Activated CD4-positive, alpha-beta T cell treated with anti-CD3 and anti-CD28 coated beads for 36 hours (primary cell): ENCODE measurements at regions of chr20 and their contacts with region 1.

Region 1: DNA sequence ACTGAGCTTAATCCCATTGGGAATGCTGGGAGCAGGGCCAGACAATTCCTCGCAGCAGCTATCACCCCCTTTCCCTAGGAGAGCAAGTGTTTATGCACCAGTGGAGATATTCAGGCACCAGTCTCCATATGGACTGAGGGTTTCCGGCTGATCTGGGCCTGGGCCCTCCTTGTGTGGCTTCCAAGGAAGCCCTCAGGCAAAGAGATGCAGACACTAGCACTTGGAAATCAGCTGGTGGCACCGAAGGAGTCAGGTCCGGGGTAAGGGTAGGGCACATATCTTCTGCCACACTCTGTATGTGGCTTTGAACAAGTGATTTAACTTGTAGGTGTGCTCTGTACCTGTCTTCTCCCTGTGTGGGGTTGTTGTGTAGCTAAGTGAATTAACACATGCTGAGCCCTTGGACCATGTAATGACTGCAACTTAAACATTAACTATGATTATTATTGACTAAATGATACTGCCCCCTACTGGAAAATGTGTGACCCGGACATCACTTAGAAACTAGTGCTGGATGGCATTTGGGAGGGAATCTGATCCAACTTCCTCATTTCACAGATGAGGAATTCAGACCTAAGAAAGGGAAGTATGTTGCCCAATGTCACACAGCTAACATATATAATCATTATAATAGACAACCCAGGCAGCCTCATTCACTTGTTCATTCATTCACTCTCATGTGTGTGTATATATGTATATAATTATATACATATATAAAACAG is 19.3 kb upstream of the WFDC2 start:
- DNase-seq: peak; percentile 24
- ATAC-seq: peak; percentile 53
- H3K4me3 Mint-ChIP-seq: no peak overlapping the region
- H3K27ac Mint-ChIP-seq: no peak overlapping the region
- H3K4me1 Mint-ChIP-seq: peaks cover 2% of the 10 kb centered on the region
- H3K27me3 Mint-ChIP-seq: peaks cover 4% of the 10 kb centered on the region

Region 2: GRCh38 chr20:45138561-45139300 is 311.5 kb before region 1 on chr20:
- CTCF ChIA-PET with region 1: no interaction called
- POLR2A ChIA-PET with region 1: no interaction called
- intact Hi-C with region 1: no loop called
- DNase-seq: peak; percentile 92
- ATAC-seq: peak; percentile 91
- H3K4me3 Mint-ChIP-seq: no peak overlapping the region
- H3K27ac Mint-ChIP-seq: no peak overlapping the region
- H3K4me1 Mint-ChIP-seq: no peaks in the 10 kb centered on the region
- H3K27me3 Mint-ChIP-seq: peaks cover 9% of the 10 kb centered on the region

Region 3: GRCh38 chr20:45311589-45312211 is 138.6 kb before region 1 on chr20:
- CTCF ChIA-PET with region 1: interaction called, 19 read pairs
- POLR2A ChIA-PET with region 1: no interaction called
- intact Hi-C with region 1: no loop called
- DNase-seq: peak; percentile 84
- ATAC-seq: peak; percentile 86
- H3K4me3 Mint-ChIP-seq: no peak overlapping the region
- H3K27ac Mint-ChIP-seq: no peak overlapping the region
- H3K4me1 Mint-ChIP-seq: peaks cover 6% of the 10 kb centered on the region
- H3K27me3 Mint-ChIP-seq: peaks cover 45% of the 10 kb centered on the region

Region 4: DNA sequence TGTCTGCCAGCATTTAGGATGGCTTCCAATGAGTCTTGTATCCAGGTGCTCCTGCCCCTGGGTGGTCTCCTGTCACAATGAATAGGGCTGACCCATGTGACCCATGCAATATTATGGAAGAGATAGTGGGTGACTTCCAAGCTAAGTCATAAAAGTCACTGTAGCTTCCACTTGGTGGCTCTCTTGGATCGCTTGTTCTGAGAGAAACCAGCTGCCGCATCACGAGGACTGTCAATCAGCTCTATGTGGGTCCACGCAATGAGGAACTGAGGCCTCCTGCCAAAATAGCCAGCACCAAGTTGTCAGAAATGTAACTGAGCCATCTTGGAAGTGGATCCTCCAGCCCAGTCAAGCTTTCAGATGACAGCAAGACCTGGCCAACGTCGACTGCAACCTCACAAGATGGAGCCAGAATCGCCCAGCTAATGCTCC is 127.3 kb before region 1 on chr20:
- CTCF ChIA-PET with region 1: interaction called, 12 read pairs
- POLR2A ChIA-PET with region 1: interaction called, 3 read pairs
- intact Hi-C with region 1: loop called (anchors 1 kb)
- DNase-seq: no peak
- ATAC-seq: no peak
- H3K4me3 Mint-ChIP-seq: no peak overlapping the region
- H3K27ac Mint-ChIP-seq: no peak overlapping the region
- H3K4me1 Mint-ChIP-seq: peaks cover 24% of the 10 kb centered on the region
- H3K27me3 Mint-ChIP-seq: no peaks in the 10 kb centered on the region

Region 5: DNA sequence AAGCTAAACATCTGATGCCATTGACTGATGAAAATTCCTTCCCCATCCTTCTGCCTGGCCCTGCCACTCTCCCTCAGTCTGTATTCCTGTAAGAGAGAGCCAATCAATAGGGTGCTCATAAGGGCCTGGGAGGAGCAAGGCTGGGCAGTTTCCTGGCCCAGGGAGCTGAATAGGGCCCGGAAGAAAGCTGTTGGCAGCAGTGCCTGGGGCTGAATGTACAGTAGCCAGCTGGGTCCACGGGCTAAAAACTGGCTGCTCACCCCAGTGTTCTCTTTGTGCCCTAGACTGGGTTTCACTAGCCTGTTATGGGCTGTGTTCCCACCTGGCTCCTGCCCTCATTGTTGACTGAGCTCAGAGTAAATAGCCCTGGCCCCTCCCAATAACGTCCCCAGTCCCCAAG is 17.6 kb after region 1 on chr20:
- CTCF ChIA-PET with region 1: interaction called, 14 read pairs
- POLR2A ChIA-PET with region 1: no interaction called
- intact Hi-C with region 1: no loop called
- DNase-seq: no peak
- ATAC-seq: no peak
- H3K4me3 Mint-ChIP-seq: no peak overlapping the region
- H3K27ac Mint-ChIP-seq: no peak overlapping the region
- H3K4me1 Mint-ChIP-seq: peaks cover 11% of the 10 kb centered on the region
- H3K27me3 Mint-ChIP-seq: peaks cover 46% of the 10 kb centered on the region